ENCODE measurements at regions of chr9 and their contacts with region 1.

Region 1: GRCh38 chr9:123571240-123571639 is 215.2 kb downstream of the CRB2 start:
- DNase-seq: no peak
- H3K4me3 ChIP-seq: no peak overlapping the region
- H3K27ac ChIP-seq: no peak overlapping the region
- H3K4me1 ChIP-seq: no peaks in the 10 kb centered on the region
- H3K27me3 ChIP-seq: no peaks in the 10 kb centered on the region
- CTCF ChIP-seq: no peak
- POLR2A ChIP-seq: no peak

Region 2: GRCh38 chr9:123611226-123611625 is 40.0 kb after region 1 on chr9:
- intact Hi-C with region 1: no loop called
- DNase-seq: no peak
- H3K4me3 ChIP-seq: no peak overlapping the region
- H3K27ac ChIP-seq: no peak overlapping the region
- H3K4me1 ChIP-seq: no peaks in the 10 kb centered on the region
- H3K27me3 ChIP-seq: no peaks in the 10 kb centered on the region
- CTCF ChIP-seq: no peak
- POLR2A ChIP-seq: no peak

Region 3: GRCh38 chr9:123637945-123638634 is 66.8 kb after region 1 on chr9:
- intact Hi-C with region 1: loop called (anchors 5 kb)
- DNase-seq: no peak
- H3K4me3 ChIP-seq: peak overlapping the region in 1 of 2 donors; percentile 1
- H3K27ac ChIP-seq: no peak overlapping the region
- H3K4me1 ChIP-seq: no peaks in the 10 kb centered on the region
- H3K27me3 ChIP-seq: no peaks in the 10 kb centered on the region
- CTCF ChIP-seq: no peak
- POLR2A ChIP-seq: no peak

Region 4: GRCh38 chr9:123686131-123686828 is 115.0 kb after region 1 on chr9:
- intact Hi-C with region 1: no loop called
- DNase-seq: peak; percentile 33
- H3K4me3 ChIP-seq: no peak overlapping the region
- H3K27ac ChIP-seq: no peak overlapping the region
- H3K4me1 ChIP-seq: no peaks in the 10 kb centered on the region
- H3K27me3 ChIP-seq: no peaks in the 10 kb centered on the region
- CTCF ChIP-seq: no peak
- POLR2A ChIP-seq: no peak

Measured in prostate gland (tissue), 2 donors.